Heart right ventricle (tissue), 16 donors: ENCODE measurements at regions of chr17 and their contacts with region 1.

Region 1: DNA sequence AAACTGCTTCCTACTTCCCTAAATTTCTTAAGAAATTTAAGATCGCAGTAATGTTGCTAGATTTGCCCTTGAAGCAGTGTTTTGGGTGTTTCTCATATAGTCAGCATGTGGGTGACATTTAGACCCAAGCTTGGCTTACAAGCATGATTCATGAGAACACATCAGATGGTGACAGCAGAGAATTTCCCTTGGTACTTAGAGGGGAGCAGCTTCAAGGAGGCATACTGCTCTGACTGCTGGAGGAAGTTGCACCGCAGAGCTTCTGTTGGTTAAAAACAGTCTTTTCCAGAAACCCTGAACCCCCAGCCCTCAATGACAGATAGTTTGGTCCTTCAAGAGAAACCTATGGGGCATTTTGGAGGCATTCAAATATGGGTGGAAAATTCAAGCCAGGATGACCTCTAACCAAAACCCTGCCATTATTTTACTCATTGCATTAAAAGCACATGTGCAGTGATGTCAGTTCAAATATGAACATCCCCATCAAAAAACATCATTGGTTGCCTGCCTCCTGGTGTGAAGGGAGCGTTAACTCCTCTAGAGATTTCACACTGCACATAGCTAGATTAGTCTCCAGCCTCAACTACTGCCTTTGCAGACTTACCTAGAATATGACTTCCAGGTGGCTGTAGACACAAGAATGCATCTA is 201.5 kb upstream of the CACNG5 start:
- DNase-seq: no peak
- ATAC-seq: no peak
- H3K4me3 ChIP-seq: no peak overlapping the region
- H3K27ac ChIP-seq: no peak overlapping the region
- H3K4me1 ChIP-seq: peaks cover 0 to 11% (median 0%) of the 10 kb centered on the region in 9 donors
- H3K27me3 ChIP-seq: no peaks in the 10 kb centered on the region
- CTCF ChIP-seq: no peak

Region 2: DNA sequence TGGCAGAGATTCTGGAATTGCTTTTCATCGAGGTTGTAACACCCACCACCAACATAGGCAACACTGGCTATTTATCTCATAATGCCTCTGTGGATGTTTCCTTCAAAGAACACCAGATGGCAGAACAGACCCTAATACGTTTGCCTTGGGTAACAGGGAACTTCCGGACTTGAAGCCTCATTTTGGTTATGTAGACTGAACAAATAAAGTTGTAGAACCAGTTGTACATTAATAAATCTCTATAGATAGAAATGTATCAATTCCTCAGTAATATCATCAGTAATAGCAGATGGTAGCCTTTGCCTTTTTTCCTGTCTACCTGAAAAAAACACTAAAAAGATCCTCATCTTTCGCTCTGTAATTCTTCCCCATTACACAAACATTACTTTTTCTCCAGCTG is 378.3 kb before region 1 on chr17:
- intact Hi-C with region 1: loop called in 7 of 10 experiments (anchors 5 to 10 kb)
- DNase-seq: peak in 1 of 2 donors; percentile 36
- ATAC-seq: peak in 7 of 8 donors; percentile 58 to 82 (median 68)
- H3K4me3 ChIP-seq: no peak overlapping the region
- H3K27ac ChIP-seq: no peak overlapping the region
- H3K4me1 ChIP-seq: peaks cover 0 to 3% (median 0%) of the 10 kb centered on the region in 9 donors
- H3K27me3 ChIP-seq: no peaks in the 10 kb centered on the region
- CTCF ChIP-seq: peak; percentile 32 to 83 (median 70)

Region 3: GRCh38 chr17:66578781-66579489 is 54.5 kb before region 1 on chr17:
- intact Hi-C with region 1: loop called in 1 of 10 experiments (anchors 10 kb)
- DNase-seq: no peak
- ATAC-seq: peak in 1 of 8 donors; percentile 19
- H3K4me3 ChIP-seq: no peak overlapping the region
- H3K27ac ChIP-seq: no peak overlapping the region
- H3K4me1 ChIP-seq: peaks cover 0 to 33% (median 21%) of the 10 kb centered on the region in 9 donors
- H3K27me3 ChIP-seq: no peaks in the 10 kb centered on the region
- CTCF ChIP-seq: no peak